Mammary epithelial cell (primary cell): ENCODE measurements at regions of chr4 and their contacts with region 1.

Region 1: DNA sequence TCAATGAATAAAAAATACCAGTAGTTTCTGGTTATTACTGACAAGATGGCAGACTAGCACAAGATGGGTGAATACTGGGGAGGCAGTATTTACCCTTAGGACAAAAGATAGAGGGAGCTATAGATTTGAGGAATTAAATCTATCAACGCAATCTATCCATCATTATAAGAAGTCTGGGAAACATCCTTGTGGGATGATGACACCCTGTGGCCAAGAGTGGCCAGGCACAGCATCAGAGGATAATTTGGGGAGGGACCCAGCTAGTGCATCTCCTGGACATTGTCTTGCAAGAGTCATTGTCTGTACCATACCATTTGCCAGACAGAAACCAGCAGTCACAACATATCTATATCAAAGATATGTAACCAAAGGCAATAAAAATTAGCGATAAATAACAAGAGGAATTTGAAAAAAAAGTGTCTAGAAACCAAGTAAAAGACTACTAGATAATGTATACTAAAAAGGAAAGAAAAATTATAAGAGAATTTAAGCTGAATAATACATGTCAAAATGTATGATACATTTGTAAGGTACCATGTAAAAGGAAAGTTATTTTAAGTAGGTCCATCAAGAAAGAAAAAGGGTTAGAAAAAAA is 22.9 kb downstream of the KCTD8 start:
- DNase-seq: no peak
- H3K4me3 ChIP-seq: no peak overlapping the region
- H3K27ac ChIP-seq: no peak overlapping the region
- H3K4me1 ChIP-seq: no peaks in the 10 kb centered on the region
- H3K27me3 ChIP-seq: peaks cover 2% of the 10 kb centered on the region
- CTCF ChIP-seq: peak; percentile 65 to 75

Region 2: GRCh38 chr4:42995343-42995944 is 1430.3 kb before region 1 on chr4:
- CTCF ChIA-PET with region 1: no interaction called
- dilution Hi-C with region 1: no loop called
- in situ Hi-C with region 1: no loop called
- intact Hi-C with region 1: loop called (anchors 1 kb)
- DNase-seq: peak; percentile 6
- H3K4me3 ChIP-seq: no peak overlapping the region
- H3K27ac ChIP-seq: no peak overlapping the region
- H3K4me1 ChIP-seq: no peaks in the 10 kb centered on the region
- H3K27me3 ChIP-seq: no peaks in the 10 kb centered on the region
- CTCF ChIP-seq: peak; percentile 81 to 87

Region 3: DNA sequence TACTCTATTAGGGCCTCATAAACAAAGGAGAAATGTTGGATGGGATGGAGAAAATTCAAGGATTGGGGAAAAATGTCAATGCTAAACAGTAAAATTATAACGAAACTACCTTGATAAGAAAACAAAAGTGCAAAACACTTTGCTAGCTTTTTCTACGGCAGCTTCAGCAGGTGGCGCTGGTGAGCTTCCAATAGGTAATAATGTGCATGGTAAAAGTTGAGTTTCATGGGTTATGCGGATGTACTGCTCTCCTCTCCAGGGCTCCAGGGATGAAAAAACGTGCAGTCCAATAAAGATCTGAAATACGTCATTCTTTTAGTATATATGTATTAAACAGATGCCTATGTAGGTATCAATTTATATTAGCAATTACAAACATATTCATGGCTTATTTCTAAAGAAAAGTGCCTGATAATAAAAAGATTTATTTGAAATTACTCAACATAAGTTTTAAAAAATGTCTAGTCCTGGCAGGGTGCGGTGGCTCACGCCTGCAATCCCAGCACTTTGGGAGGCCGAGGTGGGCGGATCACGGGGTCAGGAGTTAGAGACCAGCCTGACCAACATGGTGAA is 1293.6 kb before region 1 on chr4:
- CTCF ChIA-PET with region 1: no interaction called
- dilution Hi-C with region 1: no loop called
- in situ Hi-C with region 1: no loop called
- intact Hi-C with region 1: loop called (anchors 2 kb)
- DNase-seq: peak; percentile 52
- H3K4me3 ChIP-seq: no peak overlapping the region
- H3K27ac ChIP-seq: no peak overlapping the region
- H3K4me1 ChIP-seq: peaks cover 4% of the 10 kb centered on the region
- H3K27me3 ChIP-seq: no peaks in the 10 kb centered on the region
- CTCF ChIP-seq: peak; percentile 82 to 89

Region 4: GRCh38 chr4:43776371-43776770 is 649.3 kb before region 1 on chr4:
- CTCF ChIA-PET with region 1: no interaction called
- dilution Hi-C with region 1: no loop called
- in situ Hi-C with region 1: no loop called
- intact Hi-C with region 1: loop called (anchors 1 kb)
- DNase-seq: no peak
- H3K4me3 ChIP-seq: no peak overlapping the region
- H3K27ac ChIP-seq: no peak overlapping the region
- H3K4me1 ChIP-seq: no peaks in the 10 kb centered on the region
- H3K27me3 ChIP-seq: no peaks in the 10 kb centered on the region
- CTCF ChIP-seq: peak; percentile 14 to 28

Region 5: DNA sequence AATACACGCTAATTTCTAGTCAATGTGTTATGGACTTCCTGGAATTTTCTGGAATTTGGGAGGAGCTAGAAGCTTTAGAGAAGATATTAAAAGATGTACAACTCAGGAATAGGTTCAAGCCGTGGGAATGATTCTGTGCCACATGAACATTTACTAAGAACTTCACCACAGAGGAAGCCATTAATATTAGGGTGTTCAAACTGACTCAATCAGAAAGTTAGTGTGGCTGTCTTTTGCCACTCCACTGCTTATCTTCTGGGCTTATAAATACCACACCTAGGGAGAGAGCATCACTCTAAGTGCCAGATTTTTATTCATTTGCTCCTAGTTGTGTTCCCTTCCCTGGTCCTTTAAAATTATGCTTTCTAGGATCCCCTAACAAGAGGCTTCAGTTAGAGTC is 386.9 kb before region 1 on chr4:
- CTCF ChIA-PET with region 1: no interaction called
- dilution Hi-C with region 1: no loop called
- in situ Hi-C with region 1: no loop called
- intact Hi-C with region 1: loop called (anchors 2 kb)
- DNase-seq: no peak
- H3K4me3 ChIP-seq: no peak overlapping the region
- H3K27ac ChIP-seq: no peak overlapping the region
- H3K4me1 ChIP-seq: no peaks in the 10 kb centered on the region
- H3K27me3 ChIP-seq: no peaks in the 10 kb centered on the region
- CTCF ChIP-seq: no peak

Region 6: GRCh38 chr4:44256414-44256813 is 169.3 kb before region 1 on chr4:
- CTCF ChIA-PET with region 1: no interaction called
- dilution Hi-C with region 1: no loop called
- in situ Hi-C with region 1: no loop called
- intact Hi-C with region 1: no loop called
- DNase-seq: no peak
- H3K4me3 ChIP-seq: no peak overlapping the region
- H3K27ac ChIP-seq: no peak overlapping the region
- H3K4me1 ChIP-seq: no peaks in the 10 kb centered on the region
- H3K27me3 ChIP-seq: peaks cover 3% of the 10 kb centered on the region
- CTCF ChIP-seq: peak; percentile 4 to 5

Region 7: GRCh38 chr4:44493924-44494323 is 68.2 kb after region 1 on chr4:
- CTCF ChIA-PET with region 1: interaction called, 12 read pairs
- dilution Hi-C with region 1: no loop called
- in situ Hi-C with region 1: no loop called
- intact Hi-C with region 1: no loop called
- DNase-seq: peak; percentile 8
- H3K4me3 ChIP-seq: no peak overlapping the region
- H3K27ac ChIP-seq: no peak overlapping the region
- H3K4me1 ChIP-seq: peaks cover 11% of the 10 kb centered on the region
- H3K27me3 ChIP-seq: no peaks in the 10 kb centered on the region
- CTCF ChIP-seq: peak; percentile 40 to 55